Psoas muscle (tissue), 8 donors: ENCODE measurements at regions of chr19 and their contacts with region 1.

Region 1: DNA sequence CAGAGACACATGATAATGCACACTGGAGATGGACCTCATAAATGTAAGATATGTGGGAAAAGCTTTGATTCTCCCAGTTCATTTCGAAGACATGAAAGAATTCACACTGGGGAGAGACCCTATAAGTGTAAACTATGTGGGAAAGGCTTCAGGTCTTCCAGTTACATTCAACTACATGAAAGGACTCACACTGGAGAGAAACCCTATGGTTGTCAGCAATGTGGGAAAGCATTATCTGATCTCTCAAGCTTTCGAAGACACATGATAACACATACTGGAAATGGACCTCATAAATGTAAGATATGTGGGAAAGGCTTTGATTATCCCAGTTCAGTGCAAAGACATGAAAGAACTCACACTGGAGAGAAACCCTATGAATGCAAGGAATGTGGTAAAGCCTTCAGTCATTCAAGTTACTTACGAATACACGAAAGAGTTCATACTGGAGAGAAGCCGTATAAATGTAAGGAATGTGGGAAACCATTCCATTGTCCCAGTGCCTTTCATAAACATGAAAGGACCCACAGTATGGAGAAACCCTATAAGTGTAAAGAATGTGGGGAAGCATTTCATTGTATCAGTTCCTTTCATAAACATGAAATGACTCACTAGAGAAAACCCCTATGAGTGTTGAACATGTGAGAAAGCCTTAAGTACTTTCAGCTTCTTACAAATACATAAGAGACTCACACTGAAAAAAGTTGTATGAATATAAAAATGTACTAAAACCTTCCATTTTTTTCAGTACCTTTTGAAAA is 14.7 kb downstream of the ZNF441 start:
- DNase-seq: no peak
- ATAC-seq: no peak
- H3K4me3 ChIP-seq: no peak overlapping the region
- H3K27ac ChIP-seq: no peak overlapping the region
- H3K4me1 ChIP-seq: no peaks in the 10 kb centered on the region
- H3K27me3 ChIP-seq: no peaks in the 10 kb centered on the region
- CTCF ChIP-seq: no peak

Region 2: DNA sequence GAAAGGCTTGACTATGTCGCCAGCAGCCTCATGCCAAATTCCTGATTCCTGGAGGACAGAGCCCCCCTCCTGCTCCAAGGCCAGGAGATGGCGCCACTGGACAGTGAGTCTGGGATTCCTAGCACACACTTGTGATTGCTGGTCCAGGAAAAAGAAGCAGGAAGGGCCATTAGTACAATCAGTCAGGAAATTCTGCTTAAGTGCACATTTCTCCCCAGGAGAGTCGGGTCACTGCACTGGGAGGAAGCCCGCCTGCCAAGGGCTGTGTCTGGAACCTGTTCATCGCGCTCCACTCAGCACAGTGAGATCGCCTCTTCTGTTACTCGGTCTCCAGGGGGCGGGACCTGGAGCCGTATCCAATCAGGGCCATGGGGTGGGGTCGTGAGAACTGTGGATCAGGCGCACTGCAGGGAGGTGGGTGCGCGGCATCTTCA is 107.8 kb before region 1 on chr19:
- intact Hi-C with region 1: loop called in 1 of 2 experiments (anchors 10 kb)
- DNase-seq: peak; percentile 73
- ATAC-seq: peak in 1 of 4 donors; percentile 35
- H3K4me3 ChIP-seq: peak overlapping the region; percentile 61
- H3K27ac ChIP-seq: no peak overlapping the region
- H3K4me1 ChIP-seq: no peaks in the 10 kb centered on the region
- H3K27me3 ChIP-seq: peaks cover 0 to 16% (median 0%) of the 10 kb centered on the region in 3 donors
- CTCF ChIP-seq: peak; percentile 46